ENCODE measurements at regions of chr1 and their contacts with region 1.

Region 1: DNA sequence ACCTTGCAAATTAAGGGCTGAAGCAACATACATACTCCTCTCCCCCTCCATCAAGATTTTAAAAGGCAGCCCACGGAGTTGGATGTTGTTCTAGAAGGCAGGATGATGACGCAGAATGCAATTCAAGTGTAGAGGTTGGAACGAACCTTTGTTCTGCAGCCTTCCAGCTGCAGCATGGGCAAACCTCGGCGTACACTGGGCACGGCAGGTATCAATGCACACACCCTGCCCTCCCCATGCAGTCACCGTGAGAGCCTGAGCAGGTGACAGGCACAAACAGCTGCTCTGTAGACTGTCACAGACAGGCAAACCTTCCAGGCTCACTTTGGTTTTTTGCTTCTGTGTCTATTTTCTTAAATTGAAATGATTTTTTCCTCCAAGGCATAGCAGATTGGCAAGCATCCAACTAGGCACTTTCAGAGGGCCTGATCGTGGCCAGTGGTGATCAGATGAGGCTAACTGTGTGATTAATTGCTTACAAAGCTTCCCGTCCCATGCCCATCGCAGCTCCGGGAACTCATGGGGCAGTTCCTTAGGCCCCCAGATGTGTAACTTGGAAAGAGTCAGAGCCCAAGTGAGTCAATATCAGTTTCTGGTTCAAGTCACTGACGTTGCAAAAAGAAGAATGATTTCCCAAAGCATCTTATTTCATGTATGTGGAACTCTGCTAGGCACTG is 82.3 kb downstream of the ITPKB start:
- DNase-seq: peak; percentile 98
- H3K4me3 Mint-ChIP-seq: peak overlapping the region; percentile 45
- H3K27ac Mint-ChIP-seq: peak overlapping the region; percentile 75
- H3K4me1 Mint-ChIP-seq: peaks cover 32% of the 10 kb centered on the region
- H3K27me3 Mint-ChIP-seq: no peaks in the 10 kb centered on the region
- CTCF ChIP-seq: no peak

Region 2: DNA sequence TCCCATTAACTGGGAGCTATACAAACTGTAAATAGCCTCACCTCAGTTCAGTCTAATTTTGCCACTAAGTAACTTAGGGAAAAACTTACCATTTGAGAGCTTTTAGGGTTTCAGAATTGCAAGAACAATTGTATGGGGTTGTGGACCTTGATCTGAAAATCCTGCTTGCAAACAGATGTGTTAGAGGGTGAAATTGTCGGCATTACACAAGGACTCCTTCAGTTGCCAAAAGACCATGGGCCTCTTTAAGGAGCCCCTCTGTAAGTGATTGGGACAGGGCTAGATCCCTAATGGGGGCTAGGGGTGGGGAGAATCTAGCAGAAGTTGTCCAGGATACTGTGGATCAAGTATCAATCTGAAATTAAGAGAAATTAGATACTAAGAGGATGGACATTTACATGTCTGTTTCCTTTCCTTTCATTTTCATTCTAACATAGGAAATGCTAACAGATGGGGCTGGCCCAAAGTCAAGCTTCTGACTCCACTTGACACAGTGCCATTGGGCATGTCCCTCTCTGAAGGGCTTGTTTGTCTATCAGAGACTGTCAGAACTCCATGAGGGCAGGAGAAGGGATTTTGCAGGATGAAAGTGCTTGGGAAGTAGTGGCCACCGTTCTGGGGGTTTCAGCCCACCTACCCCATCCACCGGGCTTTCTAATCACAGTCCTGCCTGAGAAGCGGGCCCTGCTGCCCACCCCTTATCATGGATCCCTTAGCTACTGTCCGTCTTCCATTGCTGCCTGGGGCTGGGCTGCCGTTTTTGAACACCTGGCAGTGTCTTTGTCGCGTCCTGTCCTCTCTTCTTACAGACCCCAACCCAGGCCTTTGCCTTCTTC is 53.5 kb before region 1 on chr1:
- CTCF ChIA-PET with region 1: no interaction called
- POLR2A ChIA-PET with region 1: interaction called, 11 read pairs
- intact Hi-C with region 1: no loop called
- DNase-seq: peak; percentile 91
- H3K4me3 Mint-ChIP-seq: peak overlapping the region; percentile 71
- H3K27ac Mint-ChIP-seq: peak overlapping the region; percentile 97
- H3K4me1 Mint-ChIP-seq: peaks cover 42% of the 10 kb centered on the region
- H3K27me3 Mint-ChIP-seq: peaks cover 8% of the 10 kb centered on the region
- CTCF ChIP-seq: no peak

Region 3: DNA sequence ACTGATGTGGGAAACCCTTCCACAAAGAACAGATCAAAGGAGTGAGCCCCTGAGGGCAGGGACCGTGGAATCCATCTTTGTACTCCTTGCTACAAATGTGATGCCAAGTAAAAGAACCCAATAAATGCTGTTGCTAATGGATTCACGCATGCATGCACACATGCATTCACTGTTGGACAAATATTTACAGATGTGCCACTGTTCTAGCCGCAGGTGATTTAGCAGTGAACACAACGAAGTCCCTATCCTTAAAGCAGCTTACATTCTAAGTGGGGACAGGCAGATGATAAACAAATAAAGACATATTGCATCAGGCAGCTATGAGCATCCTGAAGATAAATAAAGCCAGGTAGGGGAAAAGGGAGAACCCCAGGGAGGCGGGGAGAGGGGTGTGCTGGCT is 14.6 kb after region 1 on chr1:
- CTCF ChIA-PET with region 1: interaction called, 12 read pairs
- POLR2A ChIA-PET with region 1: interaction called, 47 read pairs
- intact Hi-C with region 1: no loop called
- DNase-seq: no peak
- H3K4me3 Mint-ChIP-seq: no peak overlapping the region
- H3K27ac Mint-ChIP-seq: no peak overlapping the region
- H3K4me1 Mint-ChIP-seq: peaks cover 14% of the 10 kb centered on the region
- H3K27me3 Mint-ChIP-seq: no peaks in the 10 kb centered on the region
- CTCF ChIP-seq: no peak

Region 4: DNA sequence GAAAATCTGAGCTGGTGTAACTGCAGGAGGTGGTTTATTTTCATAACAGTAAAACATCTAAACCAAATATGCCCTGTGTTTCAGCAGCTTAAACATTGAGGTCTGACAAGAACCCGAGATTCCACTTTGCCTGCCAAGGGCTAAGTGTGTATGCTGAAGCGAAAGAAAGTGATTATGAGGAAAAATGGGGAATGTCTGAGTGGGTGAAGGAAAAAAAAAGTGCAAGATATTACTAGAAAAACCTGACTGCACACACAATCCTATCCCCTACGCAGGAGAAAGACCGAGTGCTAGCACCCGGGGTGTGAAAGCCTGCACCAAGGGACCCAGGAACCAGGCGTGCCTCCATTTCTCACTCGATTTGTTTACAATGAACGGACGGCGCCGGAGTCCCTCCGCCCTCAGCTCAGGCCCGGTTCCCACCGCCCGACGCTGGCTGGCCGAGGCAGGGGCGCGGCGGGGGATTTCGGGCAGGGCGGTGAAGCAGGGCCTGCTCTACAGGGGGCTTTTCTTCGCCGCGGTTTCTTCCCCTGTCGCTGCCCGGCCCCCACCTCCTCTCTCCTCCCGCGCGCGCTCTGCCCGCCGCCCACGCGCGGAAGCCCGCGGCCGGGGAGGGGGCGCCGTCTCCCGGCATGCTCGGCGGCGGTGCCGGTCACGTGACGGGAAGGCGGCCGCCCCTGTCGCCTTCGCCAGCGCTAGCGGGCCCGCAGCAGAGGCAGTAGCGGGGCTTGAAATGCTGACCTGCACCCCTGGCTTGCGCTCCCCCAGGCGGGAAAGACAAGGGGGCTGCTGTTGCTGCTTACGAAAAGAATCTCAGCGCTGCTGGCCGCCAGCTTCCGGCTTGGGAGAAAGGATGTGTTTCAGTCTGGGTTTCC is 46.5 kb after region 1 on chr1:
- CTCF ChIA-PET with region 1: interaction called, 3 read pairs
- POLR2A ChIA-PET with region 1: interaction called, 29 read pairs
- intact Hi-C with region 1: loop called (anchors 5 kb)
- DNase-seq: peak; percentile 75
- H3K4me3 Mint-ChIP-seq: peak overlapping the region; percentile 62
- H3K27ac Mint-ChIP-seq: peak overlapping the region; percentile 9
- H3K4me1 Mint-ChIP-seq: peaks cover 14% of the 10 kb centered on the region
- H3K27me3 Mint-ChIP-seq: no peaks in the 10 kb centered on the region
- CTCF ChIP-seq: no peak

Region 5: DNA sequence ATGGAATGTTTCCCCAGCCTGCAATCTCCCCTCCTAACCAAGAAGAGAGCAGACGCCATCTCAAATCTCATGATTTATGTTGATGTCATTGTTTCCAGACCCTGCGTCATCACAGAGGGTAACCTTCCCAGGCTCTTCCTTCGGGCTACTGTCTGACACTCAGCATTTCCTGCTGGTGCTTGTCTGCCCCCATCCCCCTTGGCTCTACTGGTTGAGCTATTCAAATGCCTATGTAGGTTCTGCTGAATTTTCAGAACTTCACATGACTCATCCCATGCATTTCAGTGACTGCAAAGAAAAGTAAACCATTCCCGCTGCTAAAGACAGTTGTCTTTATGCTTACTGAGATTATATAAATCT is 107.1 kb after region 1 on chr1:
- CTCF ChIA-PET with region 1: interaction called, 4 read pairs
- POLR2A ChIA-PET with region 1: interaction called, 6 read pairs
- intact Hi-C with region 1: loop called (anchors 5 kb)
- DNase-seq: peak; percentile 97
- H3K4me3 Mint-ChIP-seq: no peak overlapping the region
- H3K27ac Mint-ChIP-seq: peak overlapping the region; percentile 4
- H3K4me1 Mint-ChIP-seq: peaks cover 37% of the 10 kb centered on the region
- H3K27me3 Mint-ChIP-seq: no peaks in the 10 kb centered on the region
- CTCF ChIP-seq: no peak

Measured in MCF 10A (cell line).